PC-3 (cell line): ENCODE measurements at regions of chr5 and their contacts with region 1.

Region 1: DNA sequence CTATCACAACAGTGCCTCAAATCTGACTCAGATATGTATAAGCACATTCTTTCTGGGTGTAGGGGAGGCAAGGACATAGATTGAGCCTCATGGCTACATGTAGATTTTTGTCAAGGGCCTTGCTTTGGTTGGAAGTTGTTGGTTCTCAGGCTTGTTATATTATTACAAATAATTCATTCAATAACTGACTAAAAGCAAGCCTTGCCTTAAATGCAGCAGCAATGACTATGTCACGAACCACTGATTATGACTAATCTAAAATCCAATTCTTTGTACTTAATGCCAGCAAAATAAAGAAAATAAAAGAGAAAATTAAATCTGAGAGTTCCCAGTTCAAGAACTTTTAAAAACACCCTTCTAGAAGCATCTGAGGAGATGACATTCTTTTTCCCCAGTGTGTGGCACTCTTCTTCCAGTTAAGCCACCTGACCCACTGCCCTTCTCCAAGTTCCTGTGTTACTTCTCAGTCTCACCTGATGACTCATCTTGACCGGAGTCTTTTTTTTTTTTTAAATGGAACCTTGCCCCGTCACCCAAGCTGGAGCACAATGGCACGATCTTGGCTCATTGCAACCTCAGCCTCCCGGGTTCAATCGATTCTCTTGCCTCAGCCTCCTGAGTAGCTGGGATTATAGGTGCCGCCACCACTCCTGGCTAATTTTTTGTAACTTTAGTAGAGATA is 223.9 kb upstream of the DAB2 start:
- DNase-seq: peak; percentile 93
- ATAC-seq: peak; percentile 97
- H3K4me3 ChIP-seq: no peak overlapping the region
- H3K27ac ChIP-seq: peak overlapping the region; percentile 62
- H3K4me1 ChIP-seq: peaks cover 30% of the 10 kb centered on the region
- H3K27me3 ChIP-seq: no peaks in the 10 kb centered on the region
- CTCF ChIP-seq: peak; percentile 83

Region 2: GRCh38 chr5:39599721-39600431 is 48.8 kb before region 1 on chr5:
- CTCF ChIA-PET with region 1: interaction called, 3 read pairs
- POLR2A ChIA-PET with region 1: no interaction called
- intact Hi-C with region 1: loop called (anchors 1 kb)
- DNase-seq: peak; percentile 84
- ATAC-seq: peak; percentile 81
- H3K4me3 ChIP-seq: no peak overlapping the region
- H3K27ac ChIP-seq: peak overlapping the region; percentile 36
- H3K4me1 ChIP-seq: peaks cover 16% of the 10 kb centered on the region
- H3K27me3 ChIP-seq: no peaks in the 10 kb centered on the region
- CTCF ChIP-seq: peak; percentile 90

Region 3: DNA sequence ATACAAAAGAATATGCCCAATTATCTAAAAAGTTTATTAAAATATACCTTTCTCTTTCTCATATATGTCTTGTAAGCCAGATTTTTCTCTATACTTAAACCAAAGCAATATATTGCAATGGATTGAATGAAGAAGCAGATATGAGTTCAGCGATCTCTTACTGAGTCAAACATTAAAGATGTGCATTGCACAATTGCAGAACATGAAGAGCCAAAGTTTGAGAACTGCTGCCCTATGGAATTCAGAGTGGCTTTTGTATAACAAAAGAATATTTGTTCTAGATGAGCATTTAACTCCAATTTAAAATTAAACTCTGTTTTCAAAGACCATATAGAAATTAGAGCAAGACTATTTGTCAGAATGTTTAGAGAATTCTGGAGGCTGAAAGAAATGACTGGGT is 295.1 kb after region 1 on chr5:
- CTCF ChIA-PET with region 1: no interaction called
- POLR2A ChIA-PET with region 1: no interaction called
- intact Hi-C with region 1: loop called (anchors 5 kb)
- DNase-seq: no peak
- ATAC-seq: no peak
- H3K4me3 ChIP-seq: no peak overlapping the region
- H3K27ac ChIP-seq: no peak overlapping the region
- H3K4me1 ChIP-seq: no peaks in the 10 kb centered on the region
- H3K27me3 ChIP-seq: no peaks in the 10 kb centered on the region
- CTCF ChIP-seq: no peak

Region 4: DNA sequence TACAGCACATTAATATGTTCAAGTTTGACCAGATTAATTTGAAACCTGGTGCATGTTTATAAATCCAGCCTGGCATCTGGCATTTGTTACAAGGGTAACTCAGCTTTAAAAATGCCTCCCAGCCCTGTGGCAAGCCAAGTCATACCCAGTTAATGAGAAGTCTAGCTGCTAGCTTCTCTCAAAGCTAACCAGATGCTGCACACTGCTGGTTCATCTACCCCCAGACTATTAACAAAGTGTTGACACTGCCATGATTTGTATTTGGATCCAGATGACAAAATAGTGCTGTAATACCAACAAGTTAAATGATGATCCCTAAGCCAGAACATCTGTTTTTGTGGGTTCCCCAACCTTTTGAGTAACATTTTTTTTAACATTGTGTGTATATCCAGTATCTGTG is 349.8 kb after region 1 on chr5:
- CTCF ChIA-PET with region 1: no interaction called
- POLR2A ChIA-PET with region 1: no interaction called
- intact Hi-C with region 1: no loop called
- DNase-seq: no peak
- ATAC-seq: no peak
- H3K4me3 ChIP-seq: no peak overlapping the region
- H3K27ac ChIP-seq: no peak overlapping the region
- H3K4me1 ChIP-seq: no peaks in the 10 kb centered on the region
- H3K27me3 ChIP-seq: no peaks in the 10 kb centered on the region
- CTCF ChIP-seq: no peak

Region 5: GRCh38 chr5:40321514-40321913 is 672.8 kb after region 1 on chr5:
- CTCF ChIA-PET with region 1: interaction called, 12 read pairs
- POLR2A ChIA-PET with region 1: no interaction called
- intact Hi-C with region 1: no loop called
- DNase-seq: no peak
- ATAC-seq: no peak; the same call in 1 of the 2 replicates
- H3K4me3 ChIP-seq: no peak overlapping the region
- H3K27ac ChIP-seq: no peak overlapping the region
- H3K4me1 ChIP-seq: 0 out of 2 replicates have a peak, but pooled peaks cover under 1% of the 10 kb centered on the region
- H3K27me3 ChIP-seq: no peaks in the 10 kb centered on the region
- CTCF ChIP-seq: no peak